GM12878 (cell line): ENCODE measurements at regions of chr10 and their contacts with region 1.

Region 1: GRCh38 chr10:28393966-28394568 is 91.2 kb upstream of the MPP7 start:
- DNase-seq: no peak
- ATAC-seq: peak; percentile 94
- H3K4me3 ChIP-seq: no peak overlapping the region
- H3K27ac ChIP-seq: no peak overlapping the region
- H3K4me1 ChIP-seq: no peaks in the 10 kb centered on the region
- H3K27me3 ChIP-seq: no peaks in the 10 kb centered on the region
- CTCF ChIP-seq: peak; percentile 75 to 92 (median 92)
- EP300 ChIP-seq: no peak
- POLR2A ChIP-seq: no peak
- RAD21 ChIP-seq: peak; percentile 52

Region 2: DNA sequence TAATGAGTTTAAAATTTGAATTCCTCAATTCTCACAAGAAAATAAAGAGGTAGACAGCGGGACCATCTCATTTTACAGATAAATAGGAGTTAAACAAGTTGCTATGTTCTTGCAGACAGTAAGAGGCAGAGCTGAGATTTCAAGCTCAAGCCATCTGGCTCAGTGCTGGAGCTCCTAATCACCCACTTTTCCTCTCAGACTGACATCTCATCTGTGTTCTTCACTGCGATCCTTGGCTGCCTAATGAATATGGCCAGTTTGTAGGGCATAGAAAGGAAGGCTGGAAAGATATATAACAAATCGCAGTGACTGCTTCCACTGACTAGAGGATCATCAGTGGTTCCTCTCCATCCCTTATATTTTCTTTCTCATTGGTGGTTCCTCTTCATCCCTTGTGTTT is 242.4 kb before region 1 on chr10:
- CTCF ChIA-PET with region 1: no interaction called
- POLR2A ChIA-PET with region 1: no interaction called
- RAD21 ChIA-PET with region 1: no interaction called
- SMC1A ChIA-PET with region 1: no interaction called
- in situ Hi-C with region 1: no loop called
- intact Hi-C with region 1: no loop called
- DNase-seq: no peak
- ATAC-seq: no peak
- H3K4me3 ChIP-seq: no peak overlapping the region
- H3K27ac ChIP-seq: no peak overlapping the region
- H3K4me1 ChIP-seq: no peaks in the 10 kb centered on the region
- H3K27me3 ChIP-seq: no peaks in the 10 kb centered on the region; a peak in 1 of 4 replicates
- CTCF ChIP-seq: no peak
- EP300 ChIP-seq: no peak
- POLR2A ChIP-seq: no peak
- RAD21 ChIP-seq: no peak

Region 3: DNA sequence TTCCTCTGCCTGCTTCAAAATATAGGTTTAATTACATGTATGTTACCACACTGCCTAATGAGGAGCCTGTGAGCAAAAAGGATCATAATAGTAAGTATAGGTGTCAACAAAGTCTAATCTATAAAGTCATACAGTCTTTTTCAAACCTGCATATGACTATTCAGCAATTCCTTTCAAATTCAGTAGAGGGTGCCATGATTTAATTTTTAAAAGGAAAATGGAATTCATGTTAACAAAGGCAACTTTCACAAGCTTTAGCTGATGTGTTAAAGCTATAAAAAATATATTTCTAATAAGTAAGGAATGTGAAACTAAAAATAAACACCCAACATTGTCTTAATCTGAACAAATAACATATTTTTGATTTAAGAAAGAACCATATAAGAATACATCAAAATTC is 143.3 kb before region 1 on chr10:
- CTCF ChIA-PET with region 1: interaction called, 17 read pairs
- POLR2A ChIA-PET with region 1: no interaction called
- RAD21 ChIA-PET with region 1: interaction called, 4 read pairs
- SMC1A ChIA-PET with region 1: interaction called, 12 read pairs
- in situ Hi-C with region 1: no loop called
- intact Hi-C with region 1: no loop called
- DNase-seq: no peak
- ATAC-seq: peak; percentile 32; the same call in 1 of the 3 replicates
- H3K4me3 ChIP-seq: no peak overlapping the region
- H3K27ac ChIP-seq: no peak overlapping the region
- H3K4me1 ChIP-seq: no peaks in the 10 kb centered on the region
- H3K27me3 ChIP-seq: no peaks in the 10 kb centered on the region; a peak in 1 of 4 replicates
- CTCF ChIP-seq: peak in 2 of 3 experiments; percentile 43 to 52; a peak in 3 of 6 replicates
- EP300 ChIP-seq: no peak
- POLR2A ChIP-seq: no peak
- RAD21 ChIP-seq: peak; percentile 60

Region 4: DNA sequence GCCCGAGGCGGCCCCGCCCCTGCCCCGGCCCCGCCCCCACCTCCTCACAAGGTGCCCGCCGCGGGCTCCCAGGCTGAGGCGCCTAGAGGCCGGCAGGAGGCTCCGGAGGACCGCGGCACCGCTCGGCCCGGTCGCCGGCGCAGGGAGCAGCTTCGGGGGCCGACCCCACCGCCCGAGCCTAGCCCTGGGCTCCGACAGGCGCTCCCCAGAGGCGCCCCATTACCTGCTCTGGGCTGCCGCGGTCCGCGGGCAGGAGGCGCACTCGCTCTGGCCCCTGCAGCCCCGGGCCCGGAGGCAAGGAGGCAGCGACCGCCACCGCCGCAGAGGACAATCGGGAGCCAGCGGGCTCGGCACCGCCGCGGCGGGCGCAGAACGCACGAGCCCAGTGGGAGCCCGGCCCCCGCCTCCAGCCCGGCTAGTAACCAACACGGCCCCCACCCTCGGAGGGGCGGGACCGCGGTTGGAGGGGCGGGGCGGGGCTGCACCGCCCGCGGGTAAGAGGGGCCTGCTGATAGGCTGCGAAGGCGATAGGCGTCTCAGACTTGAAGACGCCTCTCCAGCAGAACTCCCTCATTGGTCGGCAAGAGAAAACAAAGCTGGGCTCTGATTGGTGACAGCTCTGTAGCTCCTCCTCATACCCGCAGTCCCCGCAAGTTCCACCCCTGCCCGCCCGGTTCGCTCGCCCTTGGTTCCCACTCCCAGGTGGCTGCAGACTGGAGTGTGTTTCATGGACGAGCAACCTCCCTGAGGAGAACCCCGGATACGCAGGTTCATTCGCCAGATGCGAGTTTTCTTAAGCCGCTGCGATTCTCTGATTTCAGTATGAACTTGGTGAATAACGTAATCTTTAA is 91.2 kb before region 1 on chr10 and contains the start of gene MPP7:
- CTCF ChIA-PET with region 1: interaction called, 15 read pairs
- POLR2A ChIA-PET with region 1: no interaction called
- RAD21 ChIA-PET with region 1: no interaction called
- SMC1A ChIA-PET with region 1: interaction called, 3 read pairs
- in situ Hi-C with region 1: no loop called
- intact Hi-C with region 1: no loop called
- DNase-seq: peak; percentile 78
- ATAC-seq: peak; percentile 100
- H3K4me3 ChIP-seq: peak within 1 kb of the TSS; percentile 72; the same call in 1 of the 2 replicates
- H3K27ac ChIP-seq: no peak within 1 kb of the TSS
- H3K4me1 ChIP-seq: no peaks in the 10 kb centered on the region
- H3K27me3 ChIP-seq: peaks cover 0 to 5% of the 10 kb centered on the region in 2 experiments; a peak in 1 of 4 replicates
- CTCF ChIP-seq: peak in 2 of 3 experiments; percentile 22 to 38; a peak in 3 of 6 replicates
- EP300 ChIP-seq: no peak
- POLR2A ChIP-seq: no peak
- RAD21 ChIP-seq: 0 out of 2 replicates have a peak, but pooled peaks have one; percentile 20
- polyA plus RNA-seq, gene MPP7: 0.04 TPM in 1 of 2 experiments, not detected in the other

Region 5: DNA sequence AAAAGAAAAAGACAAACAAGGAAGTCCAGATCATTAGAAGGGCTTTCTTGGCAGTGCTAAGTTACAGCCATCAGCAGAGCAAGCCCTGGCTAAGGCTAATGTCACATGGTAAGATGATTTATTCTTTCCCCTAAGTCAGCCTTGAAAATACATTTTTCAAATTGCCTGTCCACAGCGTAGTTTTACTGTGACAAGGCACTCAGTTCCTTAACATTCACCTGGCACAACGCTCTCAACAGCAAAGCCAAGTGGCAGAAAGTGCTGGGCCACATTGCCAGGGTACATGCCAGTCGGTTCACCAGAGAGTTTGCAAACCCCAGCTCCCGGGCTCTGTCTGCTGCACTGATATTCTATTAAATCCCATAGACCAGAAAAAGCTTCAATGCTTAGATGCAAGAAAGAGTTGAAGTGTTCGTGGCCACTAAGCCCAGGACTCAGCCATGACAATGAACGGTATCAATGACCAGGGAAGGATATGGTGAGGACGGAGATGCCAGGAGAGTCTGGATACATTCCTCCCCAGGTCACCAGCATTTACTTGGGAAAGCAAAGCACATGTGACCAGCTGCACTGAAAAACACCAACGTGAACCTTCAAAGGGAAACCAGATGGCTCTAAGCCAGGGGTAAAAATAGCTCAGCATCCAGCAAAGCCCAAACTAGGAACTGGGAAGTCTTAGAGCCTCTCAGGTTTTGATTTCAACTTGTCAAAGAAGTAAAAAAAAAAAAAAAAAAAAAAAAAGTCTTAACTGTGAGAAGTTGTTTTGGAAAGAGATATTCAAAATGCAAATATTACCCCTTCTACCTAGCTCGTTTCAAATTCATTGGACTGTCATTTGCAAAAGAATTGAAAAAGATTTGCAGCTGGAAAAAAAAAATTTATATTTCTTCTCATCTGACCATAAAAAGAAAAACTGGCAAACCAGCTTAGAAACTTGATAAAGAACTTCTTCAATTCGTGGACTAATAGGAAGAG is 67.3 kb before region 1 on chr10:
- CTCF ChIA-PET with region 1: interaction called, 11 read pairs
- POLR2A ChIA-PET with region 1: no interaction called
- RAD21 ChIA-PET with region 1: interaction called, 3 read pairs
- SMC1A ChIA-PET with region 1: interaction called, 3 read pairs
- in situ Hi-C with region 1: no loop called
- intact Hi-C with region 1: no loop called
- DNase-seq: no peak
- ATAC-seq: no peak
- H3K4me3 ChIP-seq: no peak overlapping the region
- H3K27ac ChIP-seq: no peak overlapping the region
- H3K4me1 ChIP-seq: no peaks in the 10 kb centered on the region
- H3K27me3 ChIP-seq: 0 out of 4 replicates have a peak, but pooled peaks cover 0 to 3% of the 10 kb centered on the region in 2 experiments
- CTCF ChIP-seq: no peak
- EP300 ChIP-seq: no peak
- POLR2A ChIP-seq: no peak
- RAD21 ChIP-seq: no peak

Region 6: GRCh38 chr10:28367929-28368484 is 26.1 kb before region 1 on chr10:
- CTCF ChIA-PET with region 1: interaction called, 22 read pairs
- POLR2A ChIA-PET with region 1: no interaction called
- RAD21 ChIA-PET with region 1: interaction called, 3 read pairs
- SMC1A ChIA-PET with region 1: no interaction called
- in situ Hi-C with region 1: no loop called
- intact Hi-C with region 1: no loop called
- DNase-seq: peak; percentile 68
- ATAC-seq: peak; percentile 99
- H3K4me3 ChIP-seq: no peak overlapping the region
- H3K27ac ChIP-seq: no peak overlapping the region
- H3K4me1 ChIP-seq: peaks cover 7% of the 10 kb centered on the region
- H3K27me3 ChIP-seq: no peaks in the 10 kb centered on the region
- CTCF ChIP-seq: no peak
- EP300 ChIP-seq: no peak
- POLR2A ChIP-seq: no peak
- RAD21 ChIP-seq: 0 out of 2 replicates have a peak, but pooled peaks have one; percentile 1

Region 7: DNA sequence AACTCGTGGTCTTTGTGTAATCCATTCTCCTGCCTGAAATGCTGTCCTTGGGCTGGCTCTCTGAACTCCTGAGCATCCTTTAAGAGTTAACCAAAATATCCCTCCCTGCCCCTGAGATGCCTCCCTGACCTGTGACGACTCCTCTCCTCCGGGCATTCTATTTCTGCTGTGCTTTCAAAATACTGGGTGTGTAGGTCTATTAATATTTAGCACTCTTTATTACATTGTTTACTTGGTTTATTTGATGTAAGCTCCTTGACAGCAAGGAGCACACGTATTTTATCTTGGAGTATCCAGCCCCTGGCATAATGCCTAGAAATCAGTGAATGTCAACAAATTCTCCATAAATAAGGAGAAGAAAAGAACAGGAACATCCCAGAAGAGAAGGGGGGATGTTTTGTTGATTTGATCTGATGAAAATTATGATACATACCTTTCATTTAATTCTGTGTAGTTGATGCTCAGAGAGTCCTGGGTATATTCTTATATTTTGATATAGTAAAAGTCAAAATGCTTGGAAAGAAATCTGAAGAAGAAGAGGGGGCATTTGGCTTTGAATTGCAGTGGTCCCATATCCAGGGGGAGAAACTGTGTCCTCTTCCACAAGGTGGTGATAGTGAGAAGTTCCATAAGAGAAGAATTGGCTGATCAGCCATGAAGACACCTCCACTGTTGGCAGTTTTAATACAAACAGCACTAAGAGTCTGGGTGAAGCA is 16.5 kb after region 1 on chr10:
- CTCF ChIA-PET with region 1: interaction called, 12 read pairs
- POLR2A ChIA-PET with region 1: no interaction called
- RAD21 ChIA-PET with region 1: no interaction called
- SMC1A ChIA-PET with region 1: no interaction called
- in situ Hi-C with region 1: no loop called
- intact Hi-C with region 1: no loop called
- DNase-seq: no peak
- ATAC-seq: no peak
- H3K4me3 ChIP-seq: no peak overlapping the region
- H3K27ac ChIP-seq: no peak overlapping the region
- H3K4me1 ChIP-seq: no peaks in the 10 kb centered on the region
- H3K27me3 ChIP-seq: no peaks in the 10 kb centered on the region
- CTCF ChIP-seq: peak in 1 of 3 experiments; percentile 9; a peak in 1 of 6 replicates
- EP300 ChIP-seq: no peak
- POLR2A ChIP-seq: no peak
- RAD21 ChIP-seq: no peak